Activated CD4-positive, alpha-beta T cell treated with anti-CD3 and anti-CD28 coated beads for 36 hours (primary cell): ENCODE measurements at regions of chr10 and their contacts with region 1.

Region 1: GRCh38 chr10:24209946-24210491 is 1.1 kb downstream of the KIAA1217 start:
- DNase-seq: peak; percentile 82
- ATAC-seq: peak; percentile 84
- H3K4me3 Mint-ChIP-seq: peak overlapping the region; percentile 68
- H3K27ac Mint-ChIP-seq: peak overlapping the region; percentile 84
- H3K4me1 Mint-ChIP-seq: peaks cover 31% of the 10 kb centered on the region
- H3K27me3 Mint-ChIP-seq: peaks cover 40% of the 10 kb centered on the region

Region 2: GRCh38 chr10:23095404-23095965 is 1114.5 kb before region 1 on chr10 and contains the start of gene MSRB2:
- CTCF ChIA-PET with region 1: no interaction called
- POLR2A ChIA-PET with region 1: no interaction called
- intact Hi-C with region 1: loop called in 1 of 2 experiments (anchors 5 kb)
- DNase-seq: peak; percentile 84
- ATAC-seq: peak; percentile 58
- H3K4me3 Mint-ChIP-seq: peak within 1 kb of the TSS; percentile 95
- H3K27ac Mint-ChIP-seq: peak within 1 kb of the TSS; percentile 92
- H3K4me1 Mint-ChIP-seq: peaks cover 39% of the 10 kb centered on the region
- H3K27me3 Mint-ChIP-seq: no peaks in the 10 kb centered on the region
- total RNA-seq, gene MSRB2: 8.2 to 9.0 TPM

Region 3: DNA sequence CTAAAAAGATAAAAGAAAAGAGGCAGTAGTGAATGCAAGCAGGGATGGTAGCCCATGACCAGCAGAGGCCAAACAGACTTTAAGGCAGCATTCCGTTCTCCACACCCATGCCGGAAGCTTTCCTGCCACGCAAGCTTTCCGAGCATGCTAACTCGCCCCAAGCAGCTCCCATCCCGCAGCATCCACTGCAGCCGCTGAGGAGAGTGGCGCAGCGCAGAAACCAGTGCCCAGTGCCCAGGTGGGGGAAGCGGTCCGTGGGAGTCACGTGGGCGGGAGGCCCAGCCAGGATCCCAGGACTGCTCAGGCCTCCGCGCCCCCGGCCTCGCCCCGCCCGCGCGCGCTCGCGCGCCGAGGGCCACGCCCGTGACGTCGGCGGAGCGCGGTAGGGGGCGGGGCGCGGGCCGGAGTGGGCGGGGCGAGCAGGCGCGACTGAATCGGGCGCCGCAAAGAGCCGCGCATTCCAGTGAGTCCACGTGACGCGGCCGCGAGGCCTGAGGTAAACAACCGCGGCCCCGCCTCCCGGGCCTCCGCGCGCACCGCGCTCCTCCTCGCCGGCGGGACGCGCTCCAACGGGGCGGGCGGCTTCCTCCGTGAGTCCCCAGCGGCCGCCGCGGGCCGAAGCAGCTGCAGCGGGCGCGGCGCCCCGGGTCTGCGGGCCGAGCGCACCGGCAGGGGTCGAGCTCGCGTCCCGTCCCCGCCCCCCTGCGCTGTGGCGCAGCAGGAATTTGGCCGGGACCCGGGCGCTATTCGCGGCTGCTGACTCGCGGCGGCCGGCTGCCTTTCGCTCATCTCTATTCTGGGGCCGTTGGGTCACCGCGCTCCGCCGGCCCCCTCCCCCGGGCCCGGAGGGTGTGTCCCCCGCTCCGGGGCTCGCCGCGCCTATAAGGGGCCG is 771.2 kb before region 1 on chr10 and contains the start of gene OTUD1:
- CTCF ChIA-PET with region 1: no interaction called
- POLR2A ChIA-PET with region 1: no interaction called
- intact Hi-C with region 1: loop called in 1 of 2 experiments (anchors 5 kb)
- DNase-seq: peak; percentile 96
- ATAC-seq: peak; percentile 88
- H3K4me3 Mint-ChIP-seq: peak within 1 kb of the TSS; percentile 85
- H3K27ac Mint-ChIP-seq: peak within 1 kb of the TSS; percentile 91
- H3K4me1 Mint-ChIP-seq: peaks cover 28% of the 10 kb centered on the region
- H3K27me3 Mint-ChIP-seq: no peaks in the 10 kb centered on the region
- total RNA-seq, gene OTUD1: 5.7 to 6.5 TPM

Region 4: GRCh38 chr10:24068741-24069140 is 141.3 kb before region 1 on chr10:
- CTCF ChIA-PET with region 1: no interaction called
- POLR2A ChIA-PET with region 1: no interaction called
- intact Hi-C with region 1: no loop called
- DNase-seq: no peak
- ATAC-seq: no peak
- H3K4me3 Mint-ChIP-seq: no peak overlapping the region
- H3K27ac Mint-ChIP-seq: no peak overlapping the region
- H3K4me1 Mint-ChIP-seq: no peaks in the 10 kb centered on the region
- H3K27me3 Mint-ChIP-seq: no peaks in the 10 kb centered on the region

Region 5: GRCh38 chr10:24299578-24300260 is 89.7 kb after region 1 on chr10:
- CTCF ChIA-PET with region 1: no interaction called
- POLR2A ChIA-PET with region 1: no interaction called
- intact Hi-C with region 1: loop called in 1 of 2 experiments (anchors 1 kb)
- DNase-seq: peak; percentile 9
- ATAC-seq: peak; percentile 83
- H3K4me3 Mint-ChIP-seq: no peak overlapping the region
- H3K27ac Mint-ChIP-seq: no peak overlapping the region
- H3K4me1 Mint-ChIP-seq: peaks cover 4% of the 10 kb centered on the region
- H3K27me3 Mint-ChIP-seq: peaks cover 10% of the 10 kb centered on the region

Region 6: GRCh38 chr10:24603333-24603732 is 393.3 kb after region 1 on chr10:
- CTCF ChIA-PET with region 1: no interaction called
- POLR2A ChIA-PET with region 1: no interaction called
- intact Hi-C with region 1: loop called in 1 of 2 experiments (anchors 5 kb)
- DNase-seq: peak; percentile 47
- ATAC-seq: peak; percentile 97
- H3K4me3 Mint-ChIP-seq: peak overlapping the region; percentile 25
- H3K27ac Mint-ChIP-seq: peak overlapping the region; percentile 91
- H3K4me1 Mint-ChIP-seq: peaks cover 26% of the 10 kb centered on the region
- H3K27me3 Mint-ChIP-seq: no peaks in the 10 kb centered on the region

Region 7: DNA sequence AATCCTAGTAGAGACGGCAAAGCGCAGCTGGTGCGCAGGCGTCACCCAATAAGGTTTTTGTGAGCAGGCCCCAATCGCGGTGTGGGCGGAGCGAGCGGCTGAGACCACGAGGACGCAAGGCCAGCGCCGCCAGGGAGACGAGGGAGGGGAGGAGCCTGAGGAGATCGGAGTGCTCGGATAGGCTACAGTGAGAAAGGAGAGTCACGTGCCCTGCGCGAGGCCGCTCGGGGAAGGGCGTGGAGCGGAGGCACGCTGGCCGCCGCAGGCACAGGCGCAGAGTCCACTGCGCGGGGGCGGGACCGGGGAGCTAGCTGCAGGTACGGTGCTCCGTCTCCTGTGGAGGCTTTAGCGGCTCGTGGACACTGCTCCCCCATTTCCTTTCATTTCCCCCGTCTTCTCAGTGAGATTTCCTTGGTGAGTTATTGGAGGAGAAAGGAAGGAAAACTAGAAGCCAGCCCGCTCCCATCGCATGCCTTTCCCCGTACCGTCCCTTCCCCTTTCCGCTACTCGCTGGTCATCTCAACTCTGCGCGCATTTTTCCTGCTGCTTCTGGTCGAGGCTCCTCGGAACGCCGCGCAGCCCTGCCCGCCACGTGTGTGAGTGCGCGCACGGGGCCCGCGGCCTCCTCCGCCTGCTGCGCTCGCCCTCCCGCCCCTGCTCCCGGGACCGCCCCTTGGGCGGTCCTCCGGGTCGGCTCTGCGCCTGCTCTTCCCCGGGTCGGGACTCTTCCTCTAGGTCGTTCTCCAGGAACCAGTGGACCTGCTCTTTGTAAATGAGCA is 806.5 kb after region 1 on chr10 and contains the start of gene THNSL1:
- CTCF ChIA-PET with region 1: no interaction called
- POLR2A ChIA-PET with region 1: no interaction called
- intact Hi-C with region 1: loop called in 1 of 2 experiments (anchors 5 kb)
- DNase-seq: peak; percentile 98
- ATAC-seq: peak; percentile 99
- H3K4me3 Mint-ChIP-seq: peak within 1 kb of the TSS; percentile 85
- H3K27ac Mint-ChIP-seq: peak within 1 kb of the TSS; percentile 98
- H3K4me1 Mint-ChIP-seq: peaks cover 23% of the 10 kb centered on the region
- H3K27me3 Mint-ChIP-seq: no peaks in the 10 kb centered on the region
- total RNA-seq, gene THNSL1: 8.0 to 9.5 TPM